Thyroid gland (tissue), 4 donors: ENCODE measurements at regions of chr2 and their contacts with region 1.

Region 1: GRCh38 chr2:68745006-68745405 is 10.4 kb downstream of the ARHGAP25 start:
- DNase-seq: no peak
- H3K4me3 ChIP-seq: no peak overlapping the region
- H3K27ac ChIP-seq: no peak overlapping the region
- H3K4me1 ChIP-seq: no peaks in the 10 kb centered on the region
- H3K27me3 ChIP-seq: no peaks in the 10 kb centered on the region
- CTCF ChIP-seq: no peak
- POLR2A ChIP-seq: no peak

Region 2: GRCh38 chr2:68837164-68837860 is 92.3 kb after region 1 on chr2:
- intact Hi-C with region 1: loop called (anchors 5 kb)
- DNase-seq: peak; percentile 85 to 88
- H3K4me3 ChIP-seq: no peak overlapping the region
- H3K27ac ChIP-seq: peak overlapping the region in 1 of 3 donors; percentile 15
- H3K4me1 ChIP-seq: peaks cover 0 to 18% of the 10 kb centered on the region in 2 donors
- H3K27me3 ChIP-seq: no peaks in the 10 kb centered on the region
- CTCF ChIP-seq: peak; percentile 46 to 85 (median 70)
- POLR2A ChIP-seq: no peak